Common myeloid progenitor, CD34-positive (primary cell): ENCODE measurements at regions of chr16 and their contacts with region 1.

Region 1: DNA sequence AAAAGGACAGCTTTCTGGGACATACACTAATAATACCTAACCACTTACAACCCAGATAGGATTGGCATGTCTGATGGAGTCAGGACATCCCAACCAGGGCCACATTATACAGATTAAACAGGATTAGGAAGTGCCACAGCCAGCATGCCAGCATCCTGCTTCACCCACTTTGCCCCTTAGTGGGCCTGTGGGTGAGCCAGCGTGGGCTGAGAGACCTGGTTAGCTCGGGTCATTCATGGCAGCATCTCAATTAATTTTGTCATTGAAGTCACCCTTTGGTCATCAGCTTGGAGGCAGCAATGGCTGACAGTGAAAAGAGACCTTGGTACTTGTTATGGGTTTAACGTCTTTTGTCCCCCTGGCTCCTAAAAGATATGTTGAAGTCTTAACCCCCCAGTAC is 29.9 kb upstream of the SLC6A2 start:
- DNase-seq: no peak
- H3K4me3 ChIP-seq: no peak overlapping the region
- H3K27ac ChIP-seq: no peak overlapping the region
- H3K4me1 ChIP-seq: peaks cover 0 to 12% (median 2%) of the 10 kb centered on the region in 4 experiments
- H3K27me3 ChIP-seq: peaks cover 0 to 7% (median 0%) of the 10 kb centered on the region in 5 experiments

Region 2: DNA sequence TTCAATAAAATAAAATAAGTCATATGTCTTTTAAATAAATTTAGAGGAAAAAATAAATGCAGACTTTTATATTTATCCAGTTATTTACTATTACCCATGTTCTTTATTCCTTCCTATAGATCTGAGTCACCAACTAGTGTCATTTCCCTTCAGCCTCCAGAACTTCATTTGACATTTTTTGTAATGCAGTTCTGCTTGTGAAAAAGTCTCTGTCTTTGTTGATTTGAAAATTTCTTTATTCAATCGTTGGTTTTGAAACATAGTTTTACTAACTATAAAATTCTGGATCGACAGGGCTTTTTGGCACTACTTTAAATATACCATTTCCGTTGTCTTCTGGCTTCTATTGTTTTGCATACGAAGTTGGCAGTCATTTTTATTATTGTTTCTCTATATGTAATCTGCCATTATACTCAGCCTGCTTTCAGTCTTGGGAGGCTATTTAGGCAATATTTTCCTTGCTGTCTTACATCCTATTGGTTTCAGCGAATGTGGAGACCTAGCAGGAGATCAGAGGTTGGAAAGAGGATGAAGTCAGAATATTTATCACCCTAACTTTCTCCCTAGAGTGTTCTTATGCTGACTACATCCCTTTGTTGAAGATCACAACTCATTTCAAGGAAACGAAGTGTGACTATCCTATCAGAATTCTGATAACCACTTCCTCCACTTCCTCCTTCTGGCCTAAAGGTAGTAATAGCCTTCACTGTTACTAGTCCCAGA is 12.1 kb before region 1 on chr16:
- CTCF ChIA-PET with region 1: interaction called, 10 read pairs
- POLR2A ChIA-PET with region 1: no interaction called
- DNase-seq: peak in 1 of 3 donors; percentile 56
- H3K4me3 ChIP-seq: no peak overlapping the region
- H3K27ac ChIP-seq: peak overlapping the region in 1 of 2 experiments; percentile 52
- H3K4me1 ChIP-seq: peaks cover 0 to 38% (median 8%) of the 10 kb centered on the region in 4 experiments
- H3K27me3 ChIP-seq: peaks cover 0 to 2% (median 0%) of the 10 kb centered on the region in 5 experiments